OCI-LY7 (cell line): ENCODE measurements at regions of chr19 and their contacts with region 1.

Region 1: GRCh38 chr19:7293795-7294570 is at the start of gene INSR:
- DNase-seq: peak; percentile 93
- H3K4me3 ChIP-seq: peak within 1 kb of the TSS; percentile 95
- H3K27ac ChIP-seq: peak within 1 kb of the TSS; percentile 77
- H3K4me1 ChIP-seq: peaks cover 49% of the 10 kb centered on the region
- CTCF ChIP-seq: no peak
- total RNA-seq, gene INSR: 57.7 and 90.3 TPM in 2 replicates

Region 2: GRCh38 chr19:7149956-7150705 is 143.9 kb before region 1 on chr19:
- CTCF ChIA-PET with region 1: no interaction called
- POLR2A ChIA-PET with region 1: interaction called, 3 read pairs
- intact Hi-C with region 1: loop called (anchors 1 kb)
- DNase-seq: no peak
- H3K4me3 ChIP-seq: no peak overlapping the region
- H3K27ac ChIP-seq: no peak overlapping the region
- H3K4me1 ChIP-seq: no peaks in the 10 kb centered on the region
- CTCF ChIP-seq: no peak

Region 3: GRCh38 chr19:7197760-7198696 is 96.0 kb before region 1 on chr19:
- CTCF ChIA-PET with region 1: no interaction called
- POLR2A ChIA-PET with region 1: interaction called, 3 read pairs
- intact Hi-C with region 1: loop called (anchors 1 kb)
- DNase-seq: peak; percentile 97
- H3K4me3 ChIP-seq: peak overlapping the region; percentile 75
- H3K27ac ChIP-seq: peak overlapping the region; percentile 72
- H3K4me1 ChIP-seq: peaks cover 42% of the 10 kb centered on the region
- CTCF ChIP-seq: no peak

Region 4: DNA sequence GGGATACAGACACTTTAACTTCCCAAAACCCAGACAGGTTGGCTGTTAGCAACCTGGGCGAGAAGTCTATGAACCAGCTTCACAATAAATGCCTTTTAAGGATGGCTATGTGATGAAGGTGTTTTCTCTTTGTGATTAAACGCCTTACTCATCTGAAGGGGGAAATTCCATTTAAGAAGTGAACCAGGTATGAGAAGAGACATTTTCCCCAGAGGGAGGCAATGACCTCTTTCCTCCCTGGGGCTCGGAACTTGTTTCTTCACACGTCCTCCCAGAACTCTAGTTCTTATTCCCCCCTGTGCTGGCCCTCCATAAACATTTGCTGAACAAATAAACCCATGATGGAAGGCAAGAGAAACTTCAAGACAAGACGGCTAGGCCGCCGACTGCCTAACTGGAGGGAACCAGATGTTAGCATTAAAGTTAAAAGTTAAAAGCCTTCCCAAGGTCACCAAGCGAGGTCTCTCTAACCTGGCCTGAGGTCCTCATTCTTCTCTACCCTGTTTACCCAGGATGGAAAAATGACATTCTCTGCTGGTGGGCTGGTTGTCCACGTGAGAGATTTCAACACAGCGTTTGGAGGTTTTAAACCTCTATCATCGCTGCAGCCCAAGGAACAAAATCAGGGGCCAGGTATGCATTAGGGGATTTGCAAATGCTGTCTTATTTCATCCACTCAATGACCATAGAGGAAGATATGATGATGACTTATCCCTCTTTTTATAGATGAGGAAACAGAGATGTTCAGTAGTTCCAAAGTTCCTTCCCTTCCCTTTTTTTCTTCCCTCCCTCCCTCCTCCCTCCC is 79.8 kb before region 1 on chr19:
- CTCF ChIA-PET with region 1: no interaction called
- POLR2A ChIA-PET with region 1: no interaction called
- intact Hi-C with region 1: no loop called
- DNase-seq: no peak
- H3K4me3 ChIP-seq: no peak overlapping the region
- H3K27ac ChIP-seq: no peak overlapping the region
- H3K4me1 ChIP-seq: peaks cover 33% of the 10 kb centered on the region
- CTCF ChIP-seq: no peak

Region 5: GRCh38 chr19:7242601-7243258 is 51.3 kb before region 1 on chr19:
- CTCF ChIA-PET with region 1: interaction called, 3 read pairs
- POLR2A ChIA-PET with region 1: interaction called, 5 read pairs
- intact Hi-C with region 1: loop called (anchors 1 kb)
- DNase-seq: peak; percentile 62
- H3K4me3 ChIP-seq: peak overlapping the region; percentile 60
- H3K27ac ChIP-seq: peak overlapping the region; percentile 83
- H3K4me1 ChIP-seq: peaks cover 58% of the 10 kb centered on the region
- CTCF ChIP-seq: no peak

Region 6: DNA sequence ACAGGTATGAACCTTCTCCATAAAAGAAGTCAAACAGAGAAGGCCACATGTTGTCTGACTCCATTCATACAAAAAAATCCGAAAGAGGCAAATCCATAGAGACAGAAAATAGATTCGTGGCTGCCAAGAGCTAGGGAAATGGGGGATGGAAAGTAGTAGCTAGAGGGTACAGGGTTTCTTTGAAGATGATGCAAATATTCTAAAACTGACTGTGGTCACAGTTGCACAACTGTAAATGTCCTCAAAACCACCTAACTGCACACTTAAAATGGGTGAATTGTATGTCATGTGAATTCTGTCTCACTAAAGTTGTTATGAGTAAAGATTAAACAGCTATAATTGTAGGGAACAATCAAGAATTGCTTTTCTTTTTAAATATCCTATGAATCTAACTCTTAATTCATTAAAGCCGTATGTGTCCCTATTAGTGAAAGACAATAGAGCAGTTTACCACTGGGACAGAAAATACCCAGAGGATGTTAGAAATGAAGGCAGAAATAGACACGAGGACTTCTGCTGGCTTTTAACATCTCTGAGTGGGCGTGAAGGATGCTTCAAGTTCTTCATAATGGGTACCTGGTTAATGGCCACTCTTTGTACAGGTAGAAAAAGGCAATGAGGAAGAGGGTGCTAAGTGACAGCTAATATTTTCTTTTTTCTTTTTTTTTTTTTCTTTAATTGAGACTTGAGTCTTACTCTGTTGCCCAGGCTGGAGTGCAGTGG is 21.0 kb before region 1 on chr19:
- CTCF ChIA-PET with region 1: no interaction called
- POLR2A ChIA-PET with region 1: interaction called, 11 read pairs
- intact Hi-C with region 1: loop called (anchors 2 kb)
- DNase-seq: peak; percentile 80
- H3K4me3 ChIP-seq: peak overlapping the region; percentile 54
- H3K27ac ChIP-seq: peak overlapping the region; percentile 90
- H3K4me1 ChIP-seq: peaks cover 71% of the 10 kb centered on the region
- CTCF ChIP-seq: no peak